ENCODE measurements at regions of chr7 and their contacts with region 1.

Region 1: DNA sequence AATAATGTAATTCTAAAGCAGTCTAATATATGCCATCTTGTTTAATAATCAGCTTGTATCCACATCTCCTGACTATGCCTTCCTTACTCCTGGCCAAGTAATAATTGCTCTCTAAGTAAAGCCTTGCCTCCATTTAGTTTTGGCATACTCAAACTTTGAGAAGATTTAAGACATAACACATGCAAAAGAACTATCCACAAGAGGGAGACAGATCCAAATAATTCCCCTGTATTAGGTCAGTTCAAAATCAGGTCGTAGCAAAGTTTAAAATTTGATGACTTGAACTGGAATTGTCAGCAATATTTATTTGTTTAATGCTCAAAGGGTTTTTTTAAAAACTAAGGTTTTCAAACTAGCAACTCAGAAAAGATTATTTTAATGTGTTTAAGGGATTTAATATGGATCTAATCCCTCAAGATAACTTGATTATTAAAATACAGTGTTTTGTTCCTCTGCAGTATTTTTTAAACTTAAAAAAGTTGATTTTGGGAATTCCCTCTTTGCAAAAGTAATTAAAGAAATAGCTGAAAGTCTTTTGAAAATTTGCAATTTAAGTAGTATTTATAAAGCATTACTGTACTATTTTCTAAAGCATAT is 95.3 kb downstream of the HDAC9 start:
- DNase-seq: no peak
- ATAC-seq: peak in 3 of 8 donors; percentile 30 to 54 (median 52)
- H3K4me3 ChIP-seq: no peak overlapping the region
- H3K27ac ChIP-seq: no peak overlapping the region
- H3K4me1 ChIP-seq: peaks cover 0 to 8% (median 0%) of the 10 kb centered on the region in 9 donors
- H3K27me3 ChIP-seq: no peaks in the 10 kb centered on the region
- CTCF ChIP-seq: peak; percentile 21 to 71 (median 60)

Region 2: DNA sequence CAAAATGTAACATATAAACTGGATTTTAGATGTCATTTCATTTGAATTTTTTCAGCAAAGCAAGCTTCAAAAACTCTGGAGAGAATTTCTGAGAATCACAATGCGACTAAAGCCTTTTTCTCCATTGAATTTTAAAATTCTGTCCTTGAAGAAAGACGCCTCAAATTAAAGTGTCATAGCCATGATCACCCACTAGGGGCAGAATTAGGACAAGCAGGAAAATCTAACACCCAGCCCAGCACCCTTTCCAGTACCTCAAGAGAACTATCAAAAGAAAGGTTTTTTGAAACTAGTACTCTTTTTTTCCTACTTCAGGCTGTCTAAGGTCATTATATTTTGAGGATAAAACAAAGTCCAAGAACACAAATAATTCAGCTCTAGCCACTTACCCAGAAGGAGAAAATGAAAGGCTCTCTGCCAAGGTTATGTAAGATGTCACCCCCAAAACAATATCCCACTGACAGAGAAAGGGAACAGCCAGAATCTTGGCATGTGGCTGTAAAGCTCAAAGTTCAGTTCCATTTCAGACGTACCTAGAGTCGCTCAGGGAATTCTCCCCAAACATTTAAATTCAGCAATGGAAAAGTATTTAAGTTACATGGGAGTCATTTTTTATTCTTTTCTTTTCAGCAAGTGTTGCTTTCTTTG is 950.0 kb before region 1 on chr7:
- intact Hi-C with region 1: no loop called
- DNase-seq: peak in 1 of 2 donors; percentile 41
- ATAC-seq: no peak
- H3K4me3 ChIP-seq: no peak overlapping the region
- H3K27ac ChIP-seq: no peak overlapping the region
- H3K4me1 ChIP-seq: peaks cover 0 to 5% (median 0%) of the 10 kb centered on the region in 9 donors
- H3K27me3 ChIP-seq: no peaks in the 10 kb centered on the region
- CTCF ChIP-seq: peak; percentile 48 to 75 (median 65)

Region 3: GRCh38 chr7:18666107-18666728 is 75.4 kb after region 1 on chr7:
- intact Hi-C with region 1: loop called in 7 of 10 experiments (anchors 2 to 10 kb)
- DNase-seq: peak; percentile 72 to 84
- ATAC-seq: peak; percentile 86 to 97 (median 87)
- H3K4me3 ChIP-seq: no peak overlapping the region
- H3K27ac ChIP-seq: no peak overlapping the region
- H3K4me1 ChIP-seq: peaks cover 0 to 29% (median 13%) of the 10 kb centered on the region in 9 donors
- H3K27me3 ChIP-seq: no peaks in the 10 kb centered on the region
- CTCF ChIP-seq: peak; percentile 78 to 97 (median 92)